CD14-positive monocyte (primary cell): ENCODE measurements at regions of chr6 and their contacts with region 1.

Region 1: GRCh38 chr6:44074439-44075136 is 52.7 kb downstream of the MRPL14 start:
- DNase-seq: peak; percentile 69 to 77 (median 77)
- H3K4me3 ChIP-seq: peak overlapping the region in 1 of 3 experiments; percentile 68
- H3K4me3 Mint-ChIP-seq: peak overlapping the region; percentile 44 to 85
- H3K27ac ChIP-seq: no peak overlapping the region
- H3K27ac Mint-ChIP-seq: peak overlapping the region in 6 of 7 donors; percentile 52 to 90 (median 87)
- H3K4me1 ChIP-seq: peaks cover 17 to 29% of the 10 kb centered on the region in 2 donors
- H3K4me1 Mint-ChIP-seq: peaks cover 27% of the 10 kb centered on the region
- H3K27me3 ChIP-seq: peaks cover 6 to 67% of the 10 kb centered on the region in 2 donors
- H3K27me3 Mint-ChIP-seq: peaks cover 47 to 78% (median 69%) of the 10 kb centered on the region in 3 donors
- CTCF ChIP-seq: peak; percentile 93

Region 2: GRCh38 chr6:43667245-43668150 is 407.1 kb before region 1 on chr6:
- intact Hi-C with region 1: loop called (anchors 1 to 2 kb)
- DNase-seq: peak; percentile 57 to 70 (median 69)
- H3K4me3 ChIP-seq: no peak overlapping the region
- H3K4me3 Mint-ChIP-seq: peak overlapping the region in 1 of 2 donors; percentile 46
- H3K27ac ChIP-seq: no peak overlapping the region
- H3K27ac Mint-ChIP-seq: peak overlapping the region in 2 of 7 donors; percentile 30 to 85
- H3K4me1 ChIP-seq: peaks cover 8 to 14% of the 10 kb centered on the region in 2 donors
- H3K4me1 Mint-ChIP-seq: peaks cover 16% of the 10 kb centered on the region
- H3K27me3 ChIP-seq: peaks cover 0 to 3% of the 10 kb centered on the region in 2 donors
- H3K27me3 Mint-ChIP-seq: peaks cover 11 to 17% (median 16%) of the 10 kb centered on the region in 3 donors
- CTCF ChIP-seq: peak; percentile 95

Region 3: DNA sequence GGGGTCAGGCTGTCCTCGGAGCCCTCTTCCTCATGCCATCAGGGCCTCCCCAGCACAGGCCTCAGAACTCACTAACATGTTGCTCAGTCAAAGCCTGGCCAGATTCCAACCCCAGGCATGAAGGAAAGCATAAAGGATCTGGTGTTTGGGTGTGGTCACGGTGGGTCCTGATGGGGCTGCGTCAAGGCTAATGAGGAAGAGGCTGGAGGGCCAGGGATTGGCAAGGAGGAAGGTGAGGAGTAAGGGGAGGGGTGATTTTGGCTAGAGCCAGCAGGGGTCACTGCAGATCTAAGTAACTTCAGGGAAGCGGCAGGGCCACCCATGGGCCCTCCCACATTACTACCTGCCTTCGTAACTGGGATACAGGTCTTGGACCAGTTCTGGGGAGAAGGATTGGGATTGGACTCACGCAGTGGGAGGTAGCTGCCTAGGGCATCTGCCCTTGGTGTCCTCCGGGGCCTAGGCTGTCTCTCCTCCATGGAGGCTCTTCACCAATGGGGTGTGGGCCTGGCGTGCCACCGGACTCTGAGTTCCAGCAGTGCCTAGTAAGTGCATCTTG is 350.8 kb before region 1 on chr6:
- intact Hi-C with region 1: loop called (anchors 2 to 5 kb)
- DNase-seq: peak; percentile 78 to 89 (median 89)
- H3K4me3 ChIP-seq: peak overlapping the region in 1 of 3 experiments; percentile 53
- H3K4me3 Mint-ChIP-seq: peak overlapping the region; percentile 11 to 43
- H3K27ac ChIP-seq: peak overlapping the region in 1 of 2 donors; percentile 85
- H3K27ac Mint-ChIP-seq: peak overlapping the region; percentile 90 to 99 (median 98)
- H3K4me1 ChIP-seq: peaks cover 37 to 40% of the 10 kb centered on the region in 2 donors
- H3K4me1 Mint-ChIP-seq: peaks cover 50% of the 10 kb centered on the region
- H3K27me3 ChIP-seq: peaks cover 9 to 37% of the 10 kb centered on the region in 2 donors
- H3K27me3 Mint-ChIP-seq: peaks cover 26 to 46% (median 32%) of the 10 kb centered on the region in 3 donors
- CTCF ChIP-seq: peak; percentile 87

Region 4: DNA sequence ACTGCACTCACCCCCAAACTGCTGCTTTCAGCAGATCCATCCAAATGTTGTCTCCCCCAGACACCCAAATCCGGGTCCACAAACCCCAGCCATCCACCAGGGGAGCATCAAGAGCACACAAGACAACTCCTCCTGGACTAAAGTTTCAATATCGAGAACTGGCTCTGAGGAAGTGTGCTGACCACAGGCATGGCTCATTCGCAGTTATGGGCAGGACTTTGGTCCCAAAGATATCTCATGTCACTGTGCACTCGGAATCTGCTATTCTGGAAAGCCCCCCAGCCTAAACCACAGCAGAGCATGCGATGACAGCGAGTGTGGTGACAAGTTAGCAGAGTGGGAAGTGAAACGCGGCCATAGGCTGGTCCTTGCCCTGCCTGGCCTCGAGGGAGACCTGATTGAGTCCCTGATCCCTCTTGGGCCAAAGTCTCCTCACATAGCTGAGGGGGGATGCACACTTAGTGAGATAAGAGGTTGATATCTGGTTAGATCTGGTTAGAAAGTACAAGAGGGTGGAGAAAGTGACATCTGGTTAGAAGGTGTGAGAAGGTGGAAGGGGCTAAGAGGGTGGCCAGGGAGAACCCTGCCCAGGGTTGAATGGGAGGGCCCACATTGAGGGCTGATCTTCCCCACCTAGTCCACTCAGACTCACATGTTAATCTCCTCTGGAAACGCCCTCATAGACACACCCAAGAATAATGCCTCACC is 97.0 kb before region 1 on chr6:
- intact Hi-C with region 1: loop called in 1 of 2 experiments (anchors 5 kb)
- DNase-seq: peak; percentile 84 to 96 (median 90)
- H3K4me3 ChIP-seq: no peak overlapping the region
- H3K4me3 Mint-ChIP-seq: peak overlapping the region; percentile 43 to 52
- H3K27ac ChIP-seq: peak overlapping the region in 1 of 2 donors; percentile 66
- H3K27ac Mint-ChIP-seq: peak overlapping the region; percentile 28 to 97 (median 93)
- H3K4me1 ChIP-seq: peaks cover 10 to 16% of the 10 kb centered on the region in 2 donors
- H3K4me1 Mint-ChIP-seq: peaks cover 29% of the 10 kb centered on the region
- H3K27me3 ChIP-seq: no peaks in the 10 kb centered on the region
- H3K27me3 Mint-ChIP-seq: peaks cover 13 to 25% (median 17%) of the 10 kb centered on the region in 3 donors
- CTCF ChIP-seq: peak; percentile 52

Region 5: GRCh38 chr6:44010411-44011349 is 63.9 kb before region 1 on chr6:
- intact Hi-C with region 1: loop called (anchors 5 kb)
- DNase-seq: peak; percentile 72 to 82 (median 80)
- H3K4me3 ChIP-seq: no peak overlapping the region
- H3K4me3 Mint-ChIP-seq: peak overlapping the region in 1 of 2 donors; percentile 67
- H3K27ac ChIP-seq: peak overlapping the region in 1 of 2 donors; percentile 62
- H3K27ac Mint-ChIP-seq: peak overlapping the region in 5 of 7 donors; percentile 73 to 87 (median 83)
- H3K4me1 ChIP-seq: peaks cover 22 to 43% of the 10 kb centered on the region in 2 donors
- H3K4me1 Mint-ChIP-seq: peaks cover 34% of the 10 kb centered on the region
- H3K27me3 ChIP-seq: peaks cover 0 to 26% of the 10 kb centered on the region in 2 donors
- H3K27me3 Mint-ChIP-seq: peaks cover 15 to 36% (median 28%) of the 10 kb centered on the region in 3 donors
- CTCF ChIP-seq: no peak

Region 6: GRCh38 chr6:44035621-44036020 is 39.0 kb before region 1 on chr6:
- intact Hi-C with region 1: loop called (anchors 5 kb)
- DNase-seq: peak; percentile 68 to 89 (median 84)
- H3K4me3 ChIP-seq: peak overlapping the region in 1 of 3 experiments; percentile 36
- H3K4me3 Mint-ChIP-seq: peak overlapping the region; percentile 0 to 61
- H3K27ac ChIP-seq: peak overlapping the region; percentile 62 to 74
- H3K27ac Mint-ChIP-seq: peak overlapping the region; percentile 86 to 96 (median 90)
- H3K4me1 ChIP-seq: peaks cover 40 to 42% of the 10 kb centered on the region in 2 donors
- H3K4me1 Mint-ChIP-seq: peaks cover 40% of the 10 kb centered on the region
- H3K27me3 ChIP-seq: peaks cover 0 to 4% of the 10 kb centered on the region in 2 donors
- H3K27me3 Mint-ChIP-seq: peaks cover 2 to 7% (median 3%) of the 10 kb centered on the region in 3 donors
- CTCF ChIP-seq: no peak

Region 7: DNA sequence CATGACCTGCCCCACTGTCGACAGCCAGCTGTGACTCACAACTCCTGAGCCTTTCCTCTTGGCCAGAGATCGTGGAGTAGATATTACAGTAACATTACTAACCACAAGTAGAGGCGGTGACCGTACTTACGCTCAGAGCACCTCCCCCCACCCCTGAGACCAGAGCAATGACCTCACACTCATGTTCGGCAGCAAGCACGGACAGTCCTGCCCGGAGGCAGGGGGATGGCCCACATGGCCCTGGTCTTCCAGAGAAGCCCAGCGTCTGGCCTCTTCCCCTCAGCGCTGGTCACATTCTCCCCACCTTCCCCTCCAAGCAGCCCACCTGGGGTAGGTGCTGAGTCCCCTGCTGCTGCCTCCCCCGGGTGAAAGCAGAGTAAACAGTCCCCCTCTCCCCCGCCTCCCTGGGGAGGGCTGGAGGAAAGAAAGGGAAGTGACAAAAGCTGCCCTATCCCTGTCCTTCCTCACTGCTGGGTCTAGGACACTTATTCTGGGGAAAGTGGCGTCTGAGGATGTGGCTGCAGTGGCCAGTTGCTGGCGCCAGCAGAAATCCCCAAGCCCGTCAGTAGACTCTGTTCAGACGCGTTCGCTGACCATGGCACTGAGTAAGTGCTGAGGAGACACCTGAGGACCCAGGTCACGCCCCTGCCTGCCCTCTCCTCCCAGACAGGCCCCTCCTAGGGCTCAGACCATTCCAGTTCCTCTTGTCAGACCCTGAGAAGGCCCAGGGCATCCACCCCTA is 15.8 kb before region 1 on chr6:
- intact Hi-C with region 1: loop called in 1 of 2 experiments (anchors 2 kb)
- DNase-seq: peak; percentile 98 to 100 (median 99)
- H3K4me3 ChIP-seq: peak overlapping the region in 2 of 3 experiments; percentile 26 to 34
- H3K4me3 Mint-ChIP-seq: peak overlapping the region; percentile 71 to 83
- H3K27ac ChIP-seq: peak overlapping the region; percentile 99
- H3K27ac Mint-ChIP-seq: peak overlapping the region; percentile 99 to 100 (median 100)
- H3K4me1 ChIP-seq: peaks cover 58 to 70% of the 10 kb centered on the region in 2 donors
- H3K4me1 Mint-ChIP-seq: peaks cover 75% of the 10 kb centered on the region
- H3K27me3 ChIP-seq: no peaks in the 10 kb centered on the region
- H3K27me3 Mint-ChIP-seq: peaks cover 0 to 10% (median 3%) of the 10 kb centered on the region in 3 donors
- CTCF ChIP-seq: no peak